Activated CD4-positive, alpha-beta T cell treated with anti-CD3 and anti-CD28 coated beads for 36 hours (primary cell): ENCODE measurements at regions of chr16 and their contacts with region 1.

Region 1: DNA sequence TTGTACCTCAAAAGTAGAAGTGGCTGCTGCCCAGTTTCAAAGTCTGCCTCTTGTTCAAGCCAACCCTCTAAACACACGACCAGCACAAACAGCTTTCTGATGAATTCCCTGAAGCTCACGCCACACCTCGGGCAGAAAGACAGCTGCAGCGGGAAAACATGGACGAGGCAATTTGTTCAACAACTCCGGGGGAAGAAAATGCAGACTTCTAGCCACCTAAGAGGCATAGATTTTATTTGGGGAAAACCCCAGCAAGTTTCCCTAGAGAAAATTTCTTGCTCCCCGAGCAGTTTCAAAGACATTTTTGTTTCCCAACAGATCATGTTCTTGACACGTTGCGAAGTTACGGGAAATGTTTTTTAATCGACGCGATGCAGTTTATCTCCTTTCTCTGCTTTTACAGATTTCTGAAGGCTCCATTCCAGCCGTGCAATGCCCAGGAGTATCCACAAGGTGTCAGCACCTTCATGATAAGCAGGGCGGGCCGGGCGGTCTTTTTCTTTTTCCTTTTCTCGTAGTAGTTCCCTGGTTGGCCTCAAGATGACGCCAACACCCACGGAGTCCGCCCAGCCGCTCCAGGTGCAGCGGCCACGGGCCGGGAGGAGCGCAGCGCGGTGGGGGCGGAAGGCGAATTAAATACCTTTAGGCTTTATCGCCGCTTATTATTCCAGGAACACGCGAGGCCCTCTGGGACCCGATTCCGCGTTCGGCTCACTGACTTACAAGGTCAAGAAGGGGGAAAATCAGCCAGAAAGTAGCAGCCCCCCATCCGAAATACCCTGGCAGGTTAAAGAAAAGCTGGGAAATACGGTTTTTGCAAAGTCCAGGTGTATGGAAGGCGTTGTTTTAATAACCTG is 2.9 kb upstream of the FOXC2 start:
- DNase-seq: peak; percentile 94
- ATAC-seq: peak; percentile 88
- H3K4me3 Mint-ChIP-seq: no peak overlapping the region
- H3K27ac Mint-ChIP-seq: no peak overlapping the region
- H3K4me1 Mint-ChIP-seq: peaks cover 16% of the 10 kb centered on the region
- H3K27me3 Mint-ChIP-seq: peaks cover 50% of the 10 kb centered on the region

Region 2: GRCh38 chr16:86498661-86499439 is 64.9 kb before region 1 on chr16:
- CTCF ChIA-PET with region 1: no interaction called
- POLR2A ChIA-PET with region 1: no interaction called
- intact Hi-C with region 1: loop called in 1 of 2 experiments (anchors 1 kb)
- DNase-seq: no peak
- ATAC-seq: no peak
- H3K4me3 Mint-ChIP-seq: no peak overlapping the region
- H3K27ac Mint-ChIP-seq: no peak overlapping the region
- H3K4me1 Mint-ChIP-seq: peaks cover 5% of the 10 kb centered on the region
- H3K27me3 Mint-ChIP-seq: peaks cover 72% of the 10 kb centered on the region

Region 3: DNA sequence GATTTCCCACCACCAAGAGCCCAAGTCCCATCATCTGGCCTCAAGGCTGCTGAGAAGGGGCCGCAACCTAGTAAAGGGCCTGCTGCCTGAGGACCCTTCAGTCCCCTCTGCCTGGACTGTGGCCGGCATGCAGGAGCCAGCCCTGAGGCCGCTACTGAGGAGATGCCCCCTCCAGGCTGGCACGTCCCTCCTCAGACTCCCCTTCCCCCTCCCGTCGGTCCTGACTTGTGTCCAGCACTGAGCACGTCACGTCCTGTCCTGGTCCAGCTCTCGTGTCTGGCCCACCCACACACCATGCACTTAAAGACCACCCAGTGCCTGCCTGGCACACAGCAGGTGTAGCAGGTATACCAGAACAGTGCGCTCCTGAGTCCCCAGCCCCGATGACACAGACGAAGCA is 18.2 kb before region 1 on chr16:
- CTCF ChIA-PET with region 1: no interaction called
- POLR2A ChIA-PET with region 1: no interaction called
- intact Hi-C with region 1: no loop called
- DNase-seq: no peak
- ATAC-seq: no peak
- H3K4me3 Mint-ChIP-seq: no peak overlapping the region
- H3K27ac Mint-ChIP-seq: no peak overlapping the region
- H3K4me1 Mint-ChIP-seq: peaks cover 9% of the 10 kb centered on the region
- H3K27me3 Mint-ChIP-seq: no peaks in the 10 kb centered on the region

Region 4: DNA sequence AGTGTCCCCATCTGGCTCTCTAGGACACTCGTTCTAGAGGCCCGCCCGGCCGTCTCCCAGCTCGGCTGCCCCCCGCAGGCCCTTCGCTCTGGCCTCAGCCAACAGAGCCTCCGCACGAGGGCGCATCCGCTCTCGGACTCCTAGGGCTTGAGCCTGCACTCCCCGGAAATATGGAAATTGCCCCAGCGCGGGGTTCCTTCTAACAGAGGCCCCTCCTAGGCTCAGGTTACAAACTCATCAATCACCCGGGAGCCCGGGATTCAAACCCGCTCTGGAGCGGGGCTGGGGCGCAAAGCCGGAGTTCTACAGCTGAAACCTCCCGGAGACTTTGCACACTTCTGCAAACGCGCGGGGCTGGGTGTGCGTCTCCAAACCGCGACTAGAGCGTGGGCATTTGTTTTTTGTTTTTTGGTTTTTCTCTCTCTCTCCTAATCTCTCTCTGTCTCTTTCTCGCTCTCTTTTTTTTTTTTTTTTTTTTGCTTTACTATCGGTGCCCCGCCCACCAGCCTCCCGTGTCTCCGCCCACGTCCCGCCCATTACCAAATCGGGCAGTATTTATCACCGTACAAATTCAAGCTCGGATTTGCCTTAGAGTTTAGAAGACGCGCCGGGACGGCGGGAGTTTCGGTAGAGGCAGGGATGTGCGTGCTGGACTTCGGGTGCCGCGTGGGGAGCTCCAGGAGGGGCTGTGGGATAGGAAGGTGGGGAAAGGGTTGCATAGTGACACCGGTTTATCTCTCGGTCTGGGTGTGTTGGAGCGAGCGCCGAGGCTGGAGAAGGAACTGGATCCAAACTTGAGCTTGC is 12.2 kb after region 1 on chr16:
- CTCF ChIA-PET with region 1: interaction called, 11 read pairs
- POLR2A ChIA-PET with region 1: no interaction called
- intact Hi-C with region 1: loop called in 1 of 2 experiments (anchors 1 kb)
- DNase-seq: peak; percentile 76
- ATAC-seq: peak; percentile 67
- H3K4me3 Mint-ChIP-seq: peak overlapping the region; percentile 59
- H3K27ac Mint-ChIP-seq: no peak overlapping the region
- H3K4me1 Mint-ChIP-seq: peaks cover 9% of the 10 kb centered on the region
- H3K27me3 Mint-ChIP-seq: peaks cover 61% of the 10 kb centered on the region

Region 5: GRCh38 chr16:86874141-86874540 is 310.4 kb after region 1 on chr16:
- CTCF ChIA-PET with region 1: interaction called, 11 read pairs
- POLR2A ChIA-PET with region 1: no interaction called
- intact Hi-C with region 1: loop called (anchors 1 to 2 kb)
- DNase-seq: peak; percentile 62
- ATAC-seq: no peak
- H3K4me3 Mint-ChIP-seq: no peak overlapping the region
- H3K27ac Mint-ChIP-seq: no peak overlapping the region
- H3K4me1 Mint-ChIP-seq: no peaks in the 10 kb centered on the region
- H3K27me3 Mint-ChIP-seq: peaks cover 24% of the 10 kb centered on the region

Region 6: GRCh38 chr16:87076950-87077749 is 513.4 kb after region 1 on chr16:
- CTCF ChIA-PET with region 1: interaction called, 4 read pairs
- POLR2A ChIA-PET with region 1: no interaction called
- intact Hi-C with region 1: loop called in 1 of 2 experiments (anchors 5 kb)
- DNase-seq: peak; percentile 75
- ATAC-seq: no peak
- H3K4me3 Mint-ChIP-seq: no peak overlapping the region
- H3K27ac Mint-ChIP-seq: no peak overlapping the region
- H3K4me1 Mint-ChIP-seq: no peaks in the 10 kb centered on the region
- H3K27me3 Mint-ChIP-seq: peaks cover 1% of the 10 kb centered on the region

Region 7: GRCh38 chr16:87278191-87279095 is 714.7 kb after region 1 on chr16:
- CTCF ChIA-PET with region 1: interaction called, 3 read pairs
- POLR2A ChIA-PET with region 1: no interaction called
- intact Hi-C with region 1: loop called (anchors 1 to 5 kb)
- DNase-seq: peak; percentile 76
- ATAC-seq: peak; percentile 70
- H3K4me3 Mint-ChIP-seq: no peak overlapping the region
- H3K27ac Mint-ChIP-seq: no peak overlapping the region
- H3K4me1 Mint-ChIP-seq: no peaks in the 10 kb centered on the region
- H3K27me3 Mint-ChIP-seq: peaks cover 5% of the 10 kb centered on the region

Region 8: DNA sequence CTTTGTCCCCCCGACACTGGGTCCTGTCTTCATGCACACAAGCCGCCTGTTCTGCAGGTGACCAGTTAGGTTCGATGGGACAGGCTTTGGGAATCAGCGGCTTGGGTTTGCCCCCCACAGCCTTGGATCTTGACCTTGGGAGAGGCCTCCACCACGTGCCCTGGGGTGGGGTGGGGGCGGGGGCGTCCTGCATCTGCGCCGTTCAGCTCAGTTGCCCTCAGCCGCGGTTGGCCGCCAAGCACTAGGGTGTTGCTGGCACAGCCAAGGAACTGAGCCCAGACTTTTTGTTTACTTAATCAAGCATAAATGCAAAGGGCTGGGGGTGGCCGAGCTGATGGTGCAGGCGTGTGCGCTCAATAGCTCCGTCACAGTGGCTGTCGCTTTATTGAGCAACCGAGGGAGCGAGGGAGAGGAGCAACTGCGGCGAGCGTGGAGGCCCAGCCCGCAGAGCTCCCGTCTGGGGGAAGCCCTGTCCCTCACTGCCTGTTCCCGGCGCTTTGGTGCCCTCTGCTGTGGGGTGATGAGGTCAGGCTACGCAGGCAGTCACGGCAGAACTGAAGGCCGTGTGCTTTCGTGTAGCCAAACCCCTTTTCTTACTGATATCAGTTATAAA is 1072.5 kb after region 1 on chr16:
- CTCF ChIA-PET with region 1: interaction called, 3 read pairs
- POLR2A ChIA-PET with region 1: no interaction called
- intact Hi-C with region 1: loop called in 1 of 2 experiments (anchors 2 kb)
- DNase-seq: peak; percentile 93
- ATAC-seq: peak; percentile 93
- H3K4me3 Mint-ChIP-seq: peak overlapping the region; percentile 55
- H3K27ac Mint-ChIP-seq: no peak overlapping the region
- H3K4me1 Mint-ChIP-seq: peaks cover 12% of the 10 kb centered on the region
- H3K27me3 Mint-ChIP-seq: peaks cover 10% of the 10 kb centered on the region